MCF 10A (cell line): ENCODE measurements at regions of chr13 and their contacts with region 1.

Region 1: DNA sequence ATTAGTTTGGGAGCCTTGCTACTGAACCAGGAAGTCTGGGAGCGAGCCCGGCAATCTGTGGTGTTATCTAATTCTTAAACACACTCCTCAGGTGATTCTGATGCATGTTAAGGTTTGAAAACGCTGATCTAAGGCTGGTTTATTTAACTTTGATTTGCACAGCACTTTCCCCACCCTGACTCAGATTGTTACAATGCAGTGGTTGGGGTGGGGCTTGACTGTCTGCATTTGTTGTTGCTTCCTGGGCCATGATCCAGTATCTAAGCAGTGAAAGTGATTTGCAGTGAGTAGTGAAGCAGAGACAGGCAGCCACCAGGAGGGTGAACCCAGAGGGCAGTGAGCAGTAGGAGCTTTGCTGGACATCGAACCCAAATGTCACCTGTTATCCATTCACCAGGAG is 81.6 kb upstream of the ARGLU1 start:
- DNase-seq: peak; percentile 39
- H3K4me3 Mint-ChIP-seq: no peak overlapping the region
- H3K27ac Mint-ChIP-seq: no peak overlapping the region
- H3K4me1 Mint-ChIP-seq: peaks cover 7% of the 10 kb centered on the region
- H3K27me3 Mint-ChIP-seq: no peaks in the 10 kb centered on the region
- CTCF ChIP-seq: no peak

Region 2: DNA sequence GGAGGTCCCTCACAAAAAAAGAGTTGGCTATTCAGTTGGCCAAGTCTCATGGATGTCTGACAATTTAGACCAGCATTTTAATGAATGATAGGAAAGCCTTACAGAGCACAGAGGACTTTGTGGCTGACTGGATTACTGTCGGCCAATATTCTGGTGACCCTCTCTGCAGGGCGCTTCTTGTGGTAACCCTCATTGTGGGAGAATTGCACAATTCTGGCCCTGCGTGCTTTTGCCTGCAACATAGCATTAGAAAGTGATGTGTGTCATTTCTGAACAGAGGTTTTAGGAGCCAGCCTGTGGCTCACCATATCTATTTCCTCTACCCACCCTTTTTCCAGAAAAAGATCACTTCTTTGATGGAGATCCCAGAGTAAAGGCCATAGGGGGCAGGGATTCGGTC is 185.4 kb before region 1 on chr13:
- CTCF ChIA-PET with region 1: no interaction called
- POLR2A ChIA-PET with region 1: no interaction called
- intact Hi-C with region 1: no loop called
- DNase-seq: no peak
- H3K4me3 Mint-ChIP-seq: no peak overlapping the region
- H3K27ac Mint-ChIP-seq: no peak overlapping the region
- H3K4me1 Mint-ChIP-seq: no peaks in the 10 kb centered on the region
- H3K27me3 Mint-ChIP-seq: no peaks in the 10 kb centered on the region
- CTCF ChIP-seq: no peak

Region 3: GRCh38 chr13:106858908-106859904 is 209.7 kb after region 1 on chr13:
- CTCF ChIA-PET with region 1: no interaction called
- POLR2A ChIA-PET with region 1: no interaction called
- intact Hi-C with region 1: loop called (anchors 10 kb)
- DNase-seq: no peak
- H3K4me3 Mint-ChIP-seq: no peak overlapping the region
- H3K27ac Mint-ChIP-seq: no peak overlapping the region
- H3K4me1 Mint-ChIP-seq: no peaks in the 10 kb centered on the region
- H3K27me3 Mint-ChIP-seq: no peaks in the 10 kb centered on the region
- CTCF ChIP-seq: no peak